ENCODE measurements at regions of chr1 and their contacts with region 1.

Region 1: DNA sequence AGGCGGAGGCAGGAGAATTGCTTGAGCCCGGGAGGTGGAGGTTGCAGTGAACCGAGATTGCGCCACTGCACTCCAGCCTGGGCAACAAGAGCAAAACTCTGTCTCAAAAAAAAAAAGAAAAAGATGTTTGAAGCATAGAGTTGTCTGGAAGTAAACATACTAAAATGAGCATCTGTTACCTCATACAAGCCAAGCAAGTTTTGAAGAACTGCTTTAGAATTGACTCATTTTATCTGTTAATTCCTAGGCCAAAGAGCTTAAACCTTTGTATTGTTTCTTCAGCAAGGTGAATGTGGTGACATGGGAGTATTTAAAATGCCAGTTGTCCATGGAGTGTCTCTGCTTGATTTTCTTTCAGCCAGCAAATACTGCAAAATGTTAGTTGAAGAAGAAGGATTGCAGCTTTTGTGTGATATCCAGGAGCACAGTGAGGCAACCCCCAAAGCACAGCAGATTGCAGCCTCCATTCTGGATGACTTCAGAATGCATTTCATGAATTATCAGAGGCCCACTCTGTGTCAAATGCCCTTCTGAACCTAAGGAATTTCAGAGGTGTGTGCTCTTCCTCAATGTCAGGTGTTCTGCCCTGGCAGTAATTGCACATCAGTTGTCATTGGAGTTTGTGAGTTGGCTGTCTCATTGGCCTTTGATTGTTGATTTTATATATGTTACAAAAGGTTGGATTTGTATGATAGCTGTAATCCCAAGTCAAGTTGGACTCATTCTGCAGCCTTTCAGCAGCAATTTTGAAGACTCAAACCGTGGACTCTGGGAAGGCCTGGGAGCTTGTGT is 28.9 kb downstream of the ECHDC2 start:
- DNase-seq: no peak
- ATAC-seq: no peak
- H3K4me3 Mint-ChIP-seq: no peak overlapping the region
- H3K27ac Mint-ChIP-seq: no peak overlapping the region
- H3K4me1 Mint-ChIP-seq: no peaks in the 10 kb centered on the region
- H3K27me3 Mint-ChIP-seq: no peaks in the 10 kb centered on the region
- CTCF ChIP-seq: no peak

Region 2: DNA sequence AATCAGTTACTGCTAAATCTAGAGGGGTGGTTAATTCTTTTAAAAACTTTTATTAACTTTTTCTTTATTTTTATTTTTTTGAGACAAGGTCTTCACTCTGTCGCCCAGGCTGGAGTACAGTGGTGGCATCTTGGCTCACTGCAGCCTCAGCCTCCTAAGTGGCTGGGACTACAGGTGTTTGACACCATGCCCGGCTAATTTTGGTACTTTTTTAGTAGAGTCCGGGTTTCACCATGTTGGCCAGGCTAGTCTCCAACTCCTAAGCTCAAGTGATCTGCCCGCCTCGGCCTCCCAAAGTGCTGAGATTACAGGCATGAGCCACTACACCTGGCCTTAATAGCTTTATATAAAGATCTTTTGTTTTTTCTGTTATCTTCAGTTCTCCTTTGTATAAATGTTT is 154.5 kb before region 1 on chr1:
- CTCF ChIA-PET with region 1: no interaction called
- POLR2A ChIA-PET with region 1: interaction called, 14 read pairs
- DNase-seq: no peak
- ATAC-seq: no peak
- H3K4me3 Mint-ChIP-seq: no peak overlapping the region
- H3K27ac Mint-ChIP-seq: no peak overlapping the region
- H3K4me1 Mint-ChIP-seq: no peaks in the 10 kb centered on the region
- H3K27me3 Mint-ChIP-seq: no peaks in the 10 kb centered on the region
- CTCF ChIP-seq: no peak

Measured in WTC11 (cell line).